ENCODE measurements at regions of chr1 and their contacts with region 1.

Region 1: GRCh38 chr1:156090822-156091188 is 8.5 kb upstream of the MEX3A start:
- DNase-seq: peak; percentile 85 to 87
- H3K4me3 ChIP-seq: no peak overlapping the region
- H3K27ac ChIP-seq: peak overlapping the region in 1 of 2 donors; percentile 52
- H3K4me1 ChIP-seq: no peaks in the 10 kb centered on the region
- H3K27me3 ChIP-seq: no peaks in the 10 kb centered on the region
- CTCF ChIP-seq: peak; percentile 88 to 93 (median 90)
- POLR2A ChIP-seq: no peak

Region 2: DNA sequence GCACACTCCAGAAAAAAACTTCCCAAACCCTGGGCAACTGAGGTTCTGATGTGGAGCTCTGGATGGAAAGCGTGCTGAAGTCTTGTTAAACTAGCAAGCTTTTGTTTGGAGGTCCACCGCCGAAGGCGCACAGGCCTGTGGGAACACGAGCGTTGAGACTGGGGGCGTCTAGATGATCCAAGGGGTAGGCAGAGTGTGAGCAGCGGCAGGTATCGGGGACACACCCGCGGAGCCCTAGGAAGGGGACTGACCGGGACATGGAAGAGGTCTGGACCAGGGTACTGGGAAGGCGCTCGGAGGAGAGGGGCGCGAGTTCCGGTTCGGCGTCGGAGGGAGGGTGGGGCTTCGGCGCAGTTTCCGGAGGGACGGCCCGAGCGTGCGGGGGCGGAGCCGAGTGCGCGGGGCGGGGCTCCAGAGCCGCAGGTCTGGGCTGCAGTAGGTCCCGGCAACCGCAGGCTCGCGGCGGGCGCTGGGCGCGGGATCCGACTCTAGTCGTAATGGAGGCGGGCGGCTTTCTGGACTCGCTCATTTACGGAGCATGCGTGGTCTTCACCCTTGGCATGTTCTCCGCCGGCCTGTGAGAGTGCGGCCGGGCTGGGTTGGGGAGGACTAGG is 955.3 kb before region 1 on chr1 and contains the start of gene SLC50A1:
- intact Hi-C with region 1: no loop called
- DNase-seq: peak; percentile 93 to 96
- H3K4me3 ChIP-seq: peak within 1 kb of the TSS; percentile 60 to 65
- H3K27ac ChIP-seq: peak within 1 kb of the TSS; percentile 94 to 95
- H3K4me1 ChIP-seq: peaks cover 0 to 8% of the 10 kb centered on the region in 2 donors
- H3K27me3 ChIP-seq: no peaks in the 10 kb centered on the region
- CTCF ChIP-seq: peak in 3 of 4 experiments; percentile 45 to 86 (median 56)
- POLR2A ChIP-seq: peak; percentile 83 to 95
- total RNA-seq, gene SLC50A1: 0.26 to 24.0 (median 21.8) TPM

Region 3: DNA sequence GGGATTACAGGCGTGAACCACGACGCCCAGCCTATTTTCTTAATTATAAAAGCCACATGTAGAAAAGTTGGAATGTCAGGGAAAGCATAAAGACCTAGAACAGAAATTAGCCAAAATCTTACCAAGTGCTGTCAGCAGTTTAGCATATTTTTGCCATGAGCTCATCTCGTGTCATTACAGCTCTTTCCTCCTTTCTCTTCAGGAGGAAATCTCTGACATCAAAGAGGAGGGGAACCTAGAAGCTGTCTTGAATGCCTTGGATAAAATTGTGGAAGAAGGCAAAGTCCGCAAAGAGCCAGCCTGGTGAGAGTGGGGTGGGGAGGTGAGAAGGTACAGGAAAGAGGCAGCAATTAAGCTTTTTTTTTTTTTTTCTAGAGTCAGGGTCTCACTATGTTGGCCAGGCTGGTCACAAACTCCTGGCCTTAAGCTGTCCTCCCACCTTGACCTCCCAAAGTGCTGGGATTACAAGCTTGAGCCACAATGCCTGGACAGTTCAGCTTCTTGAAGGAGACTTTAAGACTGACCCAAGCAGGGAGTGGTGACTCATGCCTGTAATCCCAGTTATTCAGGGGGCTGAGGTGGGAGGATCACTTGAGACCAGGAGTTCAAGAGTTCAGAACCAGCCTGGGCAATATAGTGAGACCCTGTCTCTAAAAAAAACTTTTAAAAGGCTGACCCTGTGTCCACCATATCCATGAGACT is 142.8 kb after region 1 on chr1:
- intact Hi-C with region 1: loop called (anchors 5 kb)
- DNase-seq: no peak
- H3K4me3 ChIP-seq: no peak overlapping the region
- H3K27ac ChIP-seq: no peak overlapping the region
- H3K4me1 ChIP-seq: no peaks in the 10 kb centered on the region
- H3K27me3 ChIP-seq: no peaks in the 10 kb centered on the region
- CTCF ChIP-seq: no peak
- POLR2A ChIP-seq: no peak

Measured in uterus (tissue), 4 donors.